Motor neuron (in vitro differentiated cells): ENCODE measurements at regions of chr15 and their contacts with region 1.

Region 1: GRCh38 chr15:74307827-74308644 is 59.4 kb downstream of the CYP11A1 start:
- ATAC-seq: peak; percentile 48 to 96 (median 64)
- H3K4me3 ChIP-seq: no peak overlapping the region
- H3K27ac ChIP-seq: peak overlapping the region; percentile 73 to 91
- H3K4me1 ChIP-seq: peaks cover 86 to 97% of the 10 kb centered on the region in 2 donors

Region 2: GRCh38 chr15:74127260-74127953 is 180.6 kb before region 1 on chr15:
- in situ Hi-C with region 1: loop called in 7 of 9 experiments (anchors 10 to 25 kb)
- ATAC-seq: peak; percentile 80 to 93 (median 86)
- H3K4me3 ChIP-seq: peak overlapping the region; percentile 22 to 40 (median 36)
- H3K27ac ChIP-seq: peak overlapping the region; percentile 87 to 97
- H3K4me1 ChIP-seq: peaks cover 44 to 55% of the 10 kb centered on the region in 2 donors

Region 3: GRCh38 chr15:74144153-74144775 is 163.8 kb before region 1 on chr15:
- in situ Hi-C with region 1: loop called in 5 of 9 experiments (anchors 10 to 25 kb)
- ATAC-seq: peak in 7 of 8 experiments; percentile 61 to 97 (median 91)
- H3K4me3 ChIP-seq: no peak overlapping the region
- H3K27ac ChIP-seq: no peak overlapping the region
- H3K4me1 ChIP-seq: peaks cover 5 to 8% of the 10 kb centered on the region in 2 donors

Region 4: DNA sequence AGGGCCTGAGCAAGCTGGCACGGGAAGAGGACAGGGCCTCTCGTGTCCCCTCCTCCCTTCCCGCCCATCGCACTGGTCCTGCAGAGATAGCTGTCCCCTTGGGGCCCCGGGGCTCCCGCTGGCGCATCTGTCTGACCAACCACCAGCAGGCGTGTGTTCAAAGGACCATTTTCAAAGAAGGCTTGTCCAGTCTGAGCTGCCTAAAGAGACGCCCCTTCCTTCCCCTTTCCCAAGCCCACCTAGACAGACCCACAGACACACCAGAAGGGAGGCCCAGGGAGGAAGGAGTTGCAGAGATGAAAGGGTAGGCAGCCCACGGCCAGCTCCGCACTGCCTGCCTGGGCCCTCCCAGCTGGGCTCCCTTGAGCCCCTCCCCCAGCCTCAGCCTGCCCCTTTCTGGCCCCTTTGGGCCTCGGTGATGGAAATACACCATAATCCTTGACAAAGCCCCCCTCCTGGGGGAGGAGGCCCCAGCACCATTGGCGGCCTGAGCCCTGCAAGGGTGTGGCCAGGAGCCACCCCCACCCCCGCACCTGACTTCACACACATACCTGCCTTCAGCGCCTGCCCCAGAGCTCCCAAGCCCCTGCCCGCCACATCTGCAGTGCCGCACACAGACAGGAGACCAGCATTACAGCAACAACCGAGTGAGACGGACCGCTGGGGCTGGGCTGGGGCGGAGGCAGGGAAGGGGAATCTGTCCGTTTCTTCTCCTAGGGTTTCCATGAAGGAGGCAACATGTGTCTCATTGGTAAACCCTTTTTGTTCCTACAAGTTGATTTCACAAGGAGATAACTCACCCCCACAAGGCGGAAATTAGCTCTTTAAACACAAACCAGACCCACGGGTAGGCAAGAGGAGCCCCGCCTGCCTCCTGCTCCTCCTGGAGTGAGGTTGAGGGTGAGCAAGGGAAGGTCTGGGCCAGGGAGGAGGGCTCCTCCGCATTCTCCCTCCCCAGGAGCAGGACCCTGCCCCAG is 105.3 kb before region 1 on chr15 and contains the start of gene STRA6:
- in situ Hi-C with region 1: no loop called
- ATAC-seq: peak in 7 of 8 experiments; percentile 2 to 78 (median 77)
- H3K4me3 ChIP-seq: peak within 1 kb of the TSS in 4 of 5 donors; percentile 10 to 38 (median 17)
- H3K27ac ChIP-seq: peak within 1 kb of the TSS; percentile 74 to 86
- H3K4me1 ChIP-seq: peaks cover 48 to 56% of the 10 kb centered on the region in 2 donors
- total RNA-seq, gene STRA6: 1.7 to 53.9 (median 14.3) TPM